Activated B cell treated with CpG ODN at 0.5 μM for 24 hours (primary cell): ENCODE measurements at regions of chr7 and their contacts with region 1.

Region 1: GRCh38 chr7:35831208-35831607 is 30.4 kb downstream of the SEPTIN7 start:
- DNase-seq: no peak
- ATAC-seq: no peak
- H3K4me3 Mint-ChIP-seq: no peak overlapping the region
- H3K27ac Mint-ChIP-seq: no peak overlapping the region
- H3K4me1 Mint-ChIP-seq: peaks cover 56% of the 10 kb centered on the region
- H3K27me3 Mint-ChIP-seq: no peaks in the 10 kb centered on the region
- CTCF ChIP-seq: no peak

Region 2: DNA sequence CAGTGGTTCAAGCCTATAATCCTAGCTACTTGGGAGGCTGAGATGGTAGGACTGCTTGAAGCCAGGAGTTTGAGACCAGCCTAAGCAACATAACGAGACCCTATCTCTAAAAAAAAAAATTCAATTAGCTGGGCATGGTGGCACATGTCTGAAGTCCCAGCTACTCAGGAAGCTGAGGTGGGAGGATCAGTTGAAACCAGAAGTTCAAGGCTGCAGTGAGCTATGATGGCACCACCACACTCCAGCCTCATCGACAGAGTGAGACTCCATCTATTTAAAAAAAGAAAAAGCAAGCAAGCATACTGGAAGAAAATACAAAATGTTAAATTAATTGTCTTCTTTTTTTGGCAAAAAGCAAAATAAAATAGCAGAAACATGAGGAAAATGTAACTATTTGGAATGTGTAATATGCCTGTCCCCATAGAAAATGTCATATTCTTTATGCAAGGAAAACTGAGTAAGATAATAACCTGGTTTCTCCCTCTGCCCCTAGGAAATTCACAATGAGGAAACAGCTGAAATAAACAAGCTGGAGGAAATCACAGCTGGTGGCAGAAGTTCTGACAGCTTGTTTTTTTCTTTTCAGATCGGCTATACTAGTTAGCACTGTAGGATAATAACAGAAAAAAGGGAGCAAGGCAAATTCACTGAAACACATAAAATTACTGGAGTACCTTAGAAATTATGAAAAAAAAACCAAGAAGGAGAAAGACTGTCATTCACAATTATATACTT is 184.8 kb before region 1 on chr7:
- CTCF ChIA-PET with region 1: no interaction called
- POLR2A ChIA-PET with region 1: no interaction called
- intact Hi-C with region 1: no loop called
- DNase-seq: no peak
- ATAC-seq: no peak
- H3K4me3 Mint-ChIP-seq: no peak overlapping the region
- H3K27ac Mint-ChIP-seq: no peak overlapping the region
- H3K4me1 Mint-ChIP-seq: peaks cover 45% of the 10 kb centered on the region
- H3K27me3 Mint-ChIP-seq: no peaks in the 10 kb centered on the region
- CTCF ChIP-seq: no peak

Region 3: DNA sequence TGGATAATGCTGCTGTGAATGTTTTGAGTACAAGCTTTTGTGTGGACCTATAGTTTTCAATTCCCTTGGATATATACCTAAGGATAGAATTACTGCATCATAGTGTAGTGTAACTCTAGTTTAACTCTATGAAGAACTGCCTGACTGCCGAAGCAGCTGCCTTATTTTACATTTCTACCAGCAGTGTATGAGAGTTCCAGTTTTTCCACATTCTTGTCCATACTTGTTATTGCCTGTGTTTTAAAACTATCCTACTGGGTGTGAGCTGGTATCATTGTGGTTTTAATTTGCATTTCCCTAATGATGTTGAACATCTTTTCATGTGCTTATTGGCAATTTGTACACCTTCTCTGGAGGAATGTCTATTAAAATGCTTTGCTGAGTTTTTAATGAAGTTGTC is 14.7 kb before region 1 on chr7:
- CTCF ChIA-PET with region 1: no interaction called
- POLR2A ChIA-PET with region 1: no interaction called
- intact Hi-C with region 1: loop called (anchors 1 kb)
- DNase-seq: no peak
- ATAC-seq: no peak
- H3K4me3 Mint-ChIP-seq: no peak overlapping the region
- H3K27ac Mint-ChIP-seq: no peak overlapping the region
- H3K4me1 Mint-ChIP-seq: peaks cover 84% of the 10 kb centered on the region
- H3K27me3 Mint-ChIP-seq: no peaks in the 10 kb centered on the region
- CTCF ChIP-seq: no peak

Region 4: GRCh38 chr7:35869810-35870209 is 38.6 kb after region 1 on chr7:
- CTCF ChIA-PET with region 1: no interaction called
- POLR2A ChIA-PET with region 1: no interaction called
- intact Hi-C with region 1: loop called (anchors 5 kb)
- DNase-seq: no peak
- ATAC-seq: no peak
- H3K4me3 Mint-ChIP-seq: no peak overlapping the region
- H3K27ac Mint-ChIP-seq: no peak overlapping the region
- H3K4me1 Mint-ChIP-seq: peaks cover 33% of the 10 kb centered on the region
- H3K27me3 Mint-ChIP-seq: no peaks in the 10 kb centered on the region
- CTCF ChIP-seq: no peak

Region 5: GRCh38 chr7:36152756-36153570 is 321.8 kb after region 1 on chr7 and contains the start of gene EEPD1:
- CTCF ChIA-PET with region 1: no interaction called
- POLR2A ChIA-PET with region 1: no interaction called
- intact Hi-C with region 1: no loop called
- DNase-seq: peak; percentile 100
- ATAC-seq: peak; percentile 92
- H3K4me3 Mint-ChIP-seq: peak within 1 kb of the TSS; percentile 80
- H3K27ac Mint-ChIP-seq: no peak within 1 kb of the TSS
- H3K4me1 Mint-ChIP-seq: peaks cover 11% of the 10 kb centered on the region
- H3K27me3 Mint-ChIP-seq: peaks cover 3% of the 10 kb centered on the region
- CTCF ChIP-seq: no peak
- total RNA-seq, gene EEPD1: 0.59 and 0.64 TPM in 2 replicates